PC-9 (cell line): ENCODE measurements at regions of chr7 and their contacts with region 1.

Region 1: GRCh38 chr7:50793115-50793946 is 10.6 kb upstream of the GRB10 start:
- DNase-seq: peak in 1 of 2 experiments; percentile 72
- H3K4me3 ChIP-seq: peak overlapping the region; percentile 73; the same call in 1 of the 2 replicates
- H3K27ac ChIP-seq: no peak overlapping the region
- H3K4me1 ChIP-seq: peaks cover 24% of the 10 kb centered on the region
- H3K27me3 ChIP-seq: no peaks in the 10 kb centered on the region
- CTCF ChIP-seq: no peak

Region 2: DNA sequence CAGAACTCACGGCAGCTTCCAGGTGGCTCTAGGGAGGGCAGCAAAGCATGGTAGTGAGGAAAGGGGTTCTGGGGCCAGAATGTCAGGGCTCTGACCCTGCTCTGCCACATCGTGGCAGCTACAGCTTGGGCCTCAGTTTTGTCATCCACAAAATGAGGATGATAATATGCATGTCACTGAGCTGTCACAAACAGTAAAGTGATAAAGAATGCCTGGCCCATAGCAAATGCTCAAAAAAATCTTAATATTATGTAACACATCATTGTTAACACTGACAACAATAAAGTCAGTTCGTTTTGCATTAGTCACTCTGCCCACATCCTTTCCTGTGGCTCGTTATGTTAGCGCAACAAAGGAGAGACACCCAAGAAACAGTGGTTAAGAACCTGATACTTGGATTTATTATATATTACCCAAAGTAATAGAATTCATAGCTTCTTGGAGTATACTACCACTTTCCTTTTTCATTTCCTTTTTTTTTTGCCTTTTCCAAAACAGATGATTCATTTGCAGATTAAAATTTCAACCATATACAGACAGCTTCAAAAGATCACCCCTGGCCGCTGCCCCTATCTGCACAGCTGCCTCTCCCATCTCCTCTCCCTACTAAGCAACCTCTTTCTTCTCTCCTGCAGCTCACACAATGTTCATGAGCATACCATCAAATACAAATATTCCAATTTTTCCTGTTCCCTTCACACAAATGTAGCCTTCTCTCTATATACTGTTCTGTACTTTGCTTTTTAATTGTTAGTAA is 182.6 kb before region 1 on chr7:
- CTCF ChIA-PET with region 1: no interaction called
- POLR2A ChIA-PET with region 1: no interaction called
- intact Hi-C with region 1: loop called (anchors 5 kb)
- DNase-seq: peak; percentile 14 to 45
- H3K4me3 ChIP-seq: no peak overlapping the region
- H3K27ac ChIP-seq: no peak overlapping the region
- H3K4me1 ChIP-seq: peaks cover 6% of the 10 kb centered on the region
- H3K27me3 ChIP-seq: no peaks in the 10 kb centered on the region
- CTCF ChIP-seq: no peak

Region 3: DNA sequence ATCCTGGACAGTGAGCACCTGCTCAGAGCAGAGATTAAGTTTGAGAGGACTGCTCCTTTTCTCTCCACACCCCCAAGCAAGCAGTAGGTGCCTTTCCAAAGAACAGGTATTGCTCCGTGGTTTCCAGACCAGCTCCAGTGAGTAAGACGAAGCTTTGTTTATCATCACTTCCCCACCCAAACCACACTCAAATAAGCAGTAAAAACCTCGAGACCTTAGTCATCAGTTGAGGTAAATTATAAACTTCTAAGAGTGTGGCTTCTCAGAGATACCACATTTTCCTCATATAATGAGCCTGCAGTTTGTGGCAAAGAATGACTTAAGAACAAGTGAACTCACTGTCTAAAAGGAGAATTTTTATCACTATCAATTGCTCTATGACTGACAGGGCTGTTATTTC is 39.4 kb after region 1 on chr7:
- CTCF ChIA-PET with region 1: no interaction called
- POLR2A ChIA-PET with region 1: no interaction called
- intact Hi-C with region 1: loop called (anchors 5 kb)
- DNase-seq: peak; percentile 61 to 98
- H3K4me3 ChIP-seq: no peak overlapping the region
- H3K27ac ChIP-seq: peak overlapping the region; percentile 49
- H3K4me1 ChIP-seq: peaks cover 49% of the 10 kb centered on the region
- H3K27me3 ChIP-seq: no peaks in the 10 kb centered on the region
- CTCF ChIP-seq: no peak

Region 4: GRCh38 chr7:50962962-50963374 is 169.6 kb after region 1 on chr7:
- CTCF ChIA-PET with region 1: no interaction called
- POLR2A ChIA-PET with region 1: no interaction called
- intact Hi-C with region 1: loop called (anchors 5 kb)
- DNase-seq: peak; percentile 95 to 99
- H3K4me3 ChIP-seq: peak overlapping the region; percentile 12; the same call in 1 of the 2 replicates
- H3K27ac ChIP-seq: peak overlapping the region; percentile 59
- H3K4me1 ChIP-seq: peaks cover 36% of the 10 kb centered on the region
- H3K27me3 ChIP-seq: no peaks in the 10 kb centered on the region
- CTCF ChIP-seq: no peak

Region 5: DNA sequence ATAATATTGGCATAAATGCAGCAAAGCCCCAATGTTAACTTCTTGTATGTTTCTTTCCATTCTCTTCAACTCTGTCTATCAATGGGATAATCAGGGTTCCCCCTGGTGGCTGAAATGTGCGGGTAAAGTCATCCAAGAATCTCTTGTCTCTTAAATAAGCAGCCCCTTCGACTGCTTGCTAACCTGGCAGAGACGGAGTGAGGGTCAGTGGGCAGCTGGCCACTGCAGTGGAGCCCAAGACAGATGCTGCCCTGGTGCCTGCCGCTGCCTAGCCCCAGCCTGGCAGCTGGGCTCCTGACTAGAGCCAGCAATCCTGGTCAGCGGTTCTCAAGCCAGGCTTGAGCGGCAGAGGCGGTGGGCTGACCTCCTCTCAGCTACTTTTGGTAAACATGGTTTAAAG is 274.4 kb after region 1 on chr7:
- CTCF ChIA-PET with region 1: interaction called, 3 read pairs
- POLR2A ChIA-PET with region 1: no interaction called
- intact Hi-C with region 1: loop called (anchors 5 kb)
- DNase-seq: peak; percentile 57 to 63
- H3K4me3 ChIP-seq: no peak overlapping the region
- H3K27ac ChIP-seq: no peak overlapping the region
- H3K4me1 ChIP-seq: peaks cover 10% of the 10 kb centered on the region; the same call in 1 of the 2 replicates
- H3K27me3 ChIP-seq: no peaks in the 10 kb centered on the region
- CTCF ChIP-seq: peak; percentile 96

Region 6: DNA sequence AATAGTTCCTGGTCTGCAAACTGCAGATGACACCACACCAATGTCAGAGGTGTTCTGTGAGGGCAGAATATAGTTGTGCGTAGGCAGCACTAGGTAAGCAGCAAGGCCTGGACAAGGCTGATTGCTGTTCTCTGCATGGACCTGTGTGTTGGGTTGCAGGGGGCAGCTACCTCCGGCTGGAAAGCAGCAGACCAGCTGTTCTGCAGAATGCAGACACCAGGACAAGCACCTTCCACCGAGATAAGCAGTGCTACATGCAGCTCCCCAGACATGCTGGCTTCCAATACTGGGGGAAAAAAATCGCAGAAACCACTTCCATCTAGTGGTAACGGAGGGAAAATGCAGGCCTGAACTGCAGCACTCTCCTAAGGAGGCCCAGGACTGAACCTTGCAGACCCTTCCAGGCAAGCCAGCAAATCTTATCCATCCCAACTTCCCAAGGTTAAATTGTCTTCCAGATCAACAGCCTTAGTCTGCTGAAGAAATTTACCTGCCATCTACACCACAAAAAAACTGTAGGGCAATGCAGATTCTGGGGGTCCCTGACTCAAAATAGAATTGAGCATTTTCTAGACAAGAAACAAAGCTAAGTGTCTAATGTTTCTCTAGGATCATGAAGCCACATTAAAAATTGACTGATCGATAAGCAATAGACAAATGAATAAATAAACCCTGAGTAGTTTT is 573.7 kb after region 1 on chr7:
- CTCF ChIA-PET with region 1: no interaction called
- POLR2A ChIA-PET with region 1: no interaction called
- intact Hi-C with region 1: loop called (anchors 10 kb)
- DNase-seq: peak; percentile 54 to 61
- H3K4me3 ChIP-seq: no peak overlapping the region
- H3K27ac ChIP-seq: no peak overlapping the region
- H3K4me1 ChIP-seq: peaks cover 7% of the 10 kb centered on the region
- H3K27me3 ChIP-seq: no peaks in the 10 kb centered on the region
- CTCF ChIP-seq: peak; percentile 96